ENCODE measurements at regions of chr18 and their contacts with region 1.

Region 1: DNA sequence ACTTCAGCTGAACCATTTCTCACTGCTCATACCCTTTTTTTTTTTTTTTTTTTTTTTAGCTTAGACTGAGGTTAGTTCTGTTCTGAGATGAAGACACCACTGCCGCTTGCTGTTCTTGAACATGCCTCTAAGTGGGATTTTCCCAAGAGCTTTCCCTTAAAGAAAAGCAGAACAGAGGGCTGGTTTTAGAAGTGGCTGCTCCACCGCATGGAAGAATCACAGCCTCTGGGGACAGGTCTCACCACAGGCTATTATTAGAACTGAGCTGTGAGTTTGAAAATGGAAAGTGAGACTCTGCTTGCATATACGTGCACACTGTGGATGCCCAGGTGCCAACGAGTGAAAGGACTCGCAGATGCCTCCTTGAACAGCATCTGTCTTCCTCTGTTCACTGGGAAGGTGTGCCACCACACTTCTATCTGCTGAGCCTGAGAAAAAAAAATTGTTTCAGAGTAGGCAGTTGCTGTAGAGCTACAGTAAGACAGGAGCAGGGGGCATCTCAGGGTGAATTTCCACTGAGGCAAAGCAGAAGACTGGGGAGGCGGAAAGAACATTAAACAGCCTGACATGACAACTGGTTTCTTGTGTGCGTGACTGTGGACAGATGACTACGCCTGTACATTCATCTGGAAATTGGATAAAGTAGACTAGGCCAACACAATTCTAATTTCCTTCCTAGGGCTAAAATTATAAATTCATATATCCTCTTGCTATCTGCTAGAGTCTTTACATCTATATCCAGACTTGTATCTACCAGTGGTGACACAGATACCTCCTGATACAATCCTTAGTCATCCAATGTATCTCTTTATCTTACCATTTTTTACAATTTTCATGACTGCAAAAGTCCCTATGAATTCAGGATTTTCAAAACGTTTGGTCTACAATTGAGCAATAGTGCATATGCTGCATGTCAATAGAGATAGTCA is 1045.7 kb upstream of the CELF4 start:
- DNase-seq: no peak
- ATAC-seq: peak; percentile 70
- H3K4me3 Mint-ChIP-seq: no peak overlapping the region
- H3K27ac Mint-ChIP-seq: peak overlapping the region; percentile 50
- H3K4me1 Mint-ChIP-seq: peaks cover 8% of the 10 kb centered on the region
- H3K27me3 Mint-ChIP-seq: no peaks in the 10 kb centered on the region
- CTCF ChIP-seq: no peak

Region 2: GRCh38 chr18:38557006-38557405 is 54.3 kb before region 1 on chr18:
- CTCF ChIA-PET with region 1: no interaction called
- POLR2A ChIA-PET with region 1: no interaction called
- intact Hi-C with region 1: loop called (anchors 5 kb)
- DNase-seq: no peak
- ATAC-seq: no peak
- H3K4me3 Mint-ChIP-seq: no peak overlapping the region
- H3K27ac Mint-ChIP-seq: no peak overlapping the region
- H3K4me1 Mint-ChIP-seq: no peaks in the 10 kb centered on the region
- H3K27me3 Mint-ChIP-seq: no peaks in the 10 kb centered on the region
- CTCF ChIP-seq: no peak

Region 3: GRCh38 chr18:38654946-38655345 is 43.6 kb after region 1 on chr18:
- CTCF ChIA-PET with region 1: no interaction called
- POLR2A ChIA-PET with region 1: interaction called, 12 read pairs
- intact Hi-C with region 1: no loop called
- DNase-seq: no peak
- ATAC-seq: no peak
- H3K4me3 Mint-ChIP-seq: no peak overlapping the region
- H3K27ac Mint-ChIP-seq: no peak overlapping the region
- H3K4me1 Mint-ChIP-seq: no peaks in the 10 kb centered on the region
- H3K27me3 Mint-ChIP-seq: no peaks in the 10 kb centered on the region
- CTCF ChIP-seq: no peak

Region 4: GRCh38 chr18:38940863-38941531 is 329.7 kb after region 1 on chr18:
- CTCF ChIA-PET with region 1: no interaction called
- POLR2A ChIA-PET with region 1: interaction called, 3 read pairs
- intact Hi-C with region 1: loop called (anchors 1 kb)
- DNase-seq: no peak
- ATAC-seq: peak; percentile 75
- H3K4me3 Mint-ChIP-seq: peak overlapping the region; percentile 81
- H3K27ac Mint-ChIP-seq: peak overlapping the region; percentile 95
- H3K4me1 Mint-ChIP-seq: peaks cover 32% of the 10 kb centered on the region
- H3K27me3 Mint-ChIP-seq: peaks cover 2% of the 10 kb centered on the region
- CTCF ChIP-seq: no peak

Region 5: DNA sequence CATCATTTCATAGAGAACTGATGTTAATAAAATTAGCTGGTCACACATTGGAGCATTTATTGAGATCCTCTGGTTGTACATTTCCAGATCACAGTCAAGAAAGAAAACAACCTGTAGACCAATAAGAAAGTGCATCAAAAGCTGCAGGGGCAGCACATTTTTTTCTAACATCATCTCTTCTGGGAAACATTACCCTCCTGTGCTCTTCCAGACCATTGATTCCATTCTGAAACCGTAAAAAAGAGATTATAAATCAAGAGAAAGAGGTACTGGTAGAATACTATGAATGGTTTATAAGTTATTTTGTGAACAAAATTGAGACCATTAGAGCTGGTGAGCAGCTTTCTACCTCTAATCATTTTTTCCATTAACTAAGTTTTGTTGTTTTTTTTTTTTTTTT is 502.5 kb after region 1 on chr18:
- CTCF ChIA-PET with region 1: no interaction called
- POLR2A ChIA-PET with region 1: no interaction called
- intact Hi-C with region 1: no loop called
- DNase-seq: no peak
- ATAC-seq: no peak
- H3K4me3 Mint-ChIP-seq: no peak overlapping the region
- H3K27ac Mint-ChIP-seq: no peak overlapping the region
- H3K4me1 Mint-ChIP-seq: no peaks in the 10 kb centered on the region
- H3K27me3 Mint-ChIP-seq: no peaks in the 10 kb centered on the region
- CTCF ChIP-seq: no peak